Posterior cingulate gyrus (tissue), 11 donors: ENCODE measurements at regions of chr1 and their contacts with region 1.

Region 1: DNA sequence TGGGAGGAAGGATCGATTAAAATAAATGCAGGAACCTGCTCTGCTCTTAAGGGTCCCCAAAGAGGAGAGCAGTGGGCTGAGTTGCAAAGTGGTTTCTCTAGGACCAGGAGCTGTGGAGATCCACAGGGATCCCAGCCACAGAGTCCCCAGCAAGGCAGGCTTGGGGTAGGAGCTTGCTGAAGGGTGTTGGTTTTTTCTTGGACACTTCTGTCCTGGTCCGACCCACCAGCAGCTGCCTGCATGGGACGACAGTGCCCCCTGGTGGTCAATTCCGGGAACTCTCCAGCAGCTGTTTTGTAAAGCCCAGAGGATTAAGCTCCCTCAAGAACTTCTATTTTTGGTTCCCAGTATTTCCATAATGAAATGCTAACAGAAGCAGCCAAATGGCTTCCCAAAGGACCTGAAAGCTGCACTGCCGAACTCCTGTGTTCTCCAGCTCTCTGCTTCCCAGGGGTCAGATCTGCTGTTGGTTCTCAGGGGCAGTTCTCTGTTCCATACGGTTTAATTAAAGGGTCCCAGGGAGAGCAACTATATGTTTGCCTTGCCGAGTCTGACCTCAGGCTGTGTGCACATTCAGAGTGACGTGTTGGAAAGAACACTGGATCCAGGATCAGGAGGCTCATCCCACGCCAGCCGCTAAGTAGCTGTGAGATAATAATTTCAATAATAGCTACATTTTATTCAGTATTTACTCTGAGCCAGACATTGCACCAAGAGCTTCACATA is 23.2 kb downstream of the NENF start:
- DNase-seq: peak; percentile 88 to 99 (median 97)

Region 2: DNA sequence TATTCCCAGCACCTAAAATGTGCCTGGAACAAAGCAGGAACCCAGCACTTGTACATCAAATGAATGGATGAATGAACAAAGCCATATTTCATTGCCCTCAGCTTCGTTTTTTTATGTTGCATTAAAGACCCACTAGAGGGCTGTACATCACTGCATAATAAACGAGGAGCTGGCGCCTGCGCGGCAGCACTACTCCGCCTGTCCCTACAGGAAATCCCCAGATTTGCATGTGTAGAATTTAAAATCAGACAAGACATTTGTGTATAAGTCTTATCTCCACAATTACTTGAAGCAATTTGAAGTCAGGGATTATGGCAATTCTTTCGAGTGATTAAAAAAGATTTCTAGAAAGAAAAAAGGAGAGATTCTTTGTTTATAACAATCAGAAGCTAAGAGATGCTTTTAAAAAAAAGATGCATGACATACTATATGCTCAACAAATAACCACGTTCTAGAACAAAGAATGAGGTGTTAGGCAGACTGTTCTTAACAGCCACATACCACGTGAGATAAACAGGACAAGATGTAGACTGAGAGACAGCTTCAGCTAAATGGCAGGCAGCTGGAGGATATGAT is 775.1 kb before region 1 on chr1:
- intact Hi-C with region 1: loop called (anchors 2 kb)
- DNase-seq: peak; percentile 59 to 98 (median 77)

Region 3: GRCh38 chr1:212070720-212071302 is 385.2 kb before region 1 on chr1:
- intact Hi-C with region 1: loop called (anchors 1 kb)
- DNase-seq: no peak

Region 4: GRCh38 chr1:212368073-212368484 is 87.9 kb before region 1 on chr1:
- intact Hi-C with region 1: loop called (anchors 5 kb)
- DNase-seq: peak in 2 of 10 donors; percentile 22 to 43

Region 5: GRCh38 chr1:212782422-212783154 is 326.6 kb after region 1 on chr1:
- intact Hi-C with region 1: loop called (anchors 5 kb)
- DNase-seq: no peak